AG04450 (cell line): ENCODE measurements at regions of chr10 and their contacts with region 1.

Region 1: GRCh38 chr10:59847326-59847725 is 59.0 kb downstream of the CCDC6 start:
- DNase-seq: no peak
- H3K4me3 ChIP-seq: no peak overlapping the region
- H3K27ac ChIP-seq: no peak overlapping the region
- H3K27me3 ChIP-seq: no peaks in the 10 kb centered on the region
- CTCF ChIP-seq: no peak

Region 2: GRCh38 chr10:59808896-59809643 is 38.3 kb before region 1 on chr10:
- CTCF ChIA-PET with region 1: interaction called, 3 read pairs
- POLR2A ChIA-PET with region 1: interaction called, 13 read pairs
- DNase-seq: no peak
- H3K4me3 ChIP-seq: no peak overlapping the region
- H3K27ac ChIP-seq: no peak overlapping the region
- H3K27me3 ChIP-seq: no peaks in the 10 kb centered on the region
- CTCF ChIP-seq: peak; percentile 54